ENCODE measurements at regions of chr3 and their contacts with region 1.

Region 1: DNA sequence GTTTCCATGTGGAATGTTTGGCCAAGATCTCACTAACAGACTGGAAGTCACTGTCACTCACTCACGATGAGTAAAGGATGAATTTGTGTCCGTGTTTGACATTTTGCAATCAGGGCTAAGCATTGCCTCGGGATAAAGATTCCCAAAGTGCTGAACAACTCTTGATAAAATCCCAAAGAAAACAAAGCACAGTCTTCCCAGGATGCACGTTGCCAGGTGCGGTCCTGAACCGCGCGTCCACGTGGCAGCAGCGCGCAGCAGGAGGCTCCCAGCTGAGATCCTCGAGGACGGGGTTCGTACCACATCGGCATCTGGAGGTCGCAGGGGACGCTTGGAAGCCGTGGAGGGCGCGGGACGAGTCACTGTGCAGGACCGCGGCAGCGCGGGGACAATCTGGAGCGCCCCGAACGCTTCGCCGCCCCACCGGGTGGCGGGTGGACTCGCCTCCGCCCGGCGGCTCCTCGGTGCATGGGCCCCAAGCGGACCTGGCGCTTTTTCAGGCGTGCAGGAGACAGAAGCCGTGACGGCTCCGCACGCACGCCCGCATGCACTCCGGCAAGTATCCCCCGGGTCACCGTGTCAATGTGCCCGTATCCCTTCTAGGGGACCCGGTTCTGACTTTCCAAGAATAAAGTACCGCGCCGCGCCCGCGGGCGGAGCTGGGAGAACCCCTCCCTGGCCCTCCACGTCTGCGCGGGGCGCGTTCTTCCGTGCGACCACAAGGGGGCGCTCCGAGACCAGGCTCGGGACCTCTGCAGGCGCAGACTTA is 17.7 kb downstream of the CPN2 start:
- DNase-seq: peak; percentile 84 to 90
- ATAC-seq: peak; percentile 82 to 94 (median 92)
- H3K4me3 ChIP-seq: peak overlapping the region in 9 of 10 donors; percentile 23 to 61 (median 46)
- H3K27ac ChIP-seq: no peak overlapping the region
- H3K4me1 ChIP-seq: peaks cover 0 to 28% (median 12%) of the 10 kb centered on the region in 9 donors
- H3K27me3 ChIP-seq: peaks cover 0 to 55% (median 32%) of the 10 kb centered on the region in 7 donors
- CTCF ChIP-seq: peak; percentile 98 to 99 (median 99)

Region 2: DNA sequence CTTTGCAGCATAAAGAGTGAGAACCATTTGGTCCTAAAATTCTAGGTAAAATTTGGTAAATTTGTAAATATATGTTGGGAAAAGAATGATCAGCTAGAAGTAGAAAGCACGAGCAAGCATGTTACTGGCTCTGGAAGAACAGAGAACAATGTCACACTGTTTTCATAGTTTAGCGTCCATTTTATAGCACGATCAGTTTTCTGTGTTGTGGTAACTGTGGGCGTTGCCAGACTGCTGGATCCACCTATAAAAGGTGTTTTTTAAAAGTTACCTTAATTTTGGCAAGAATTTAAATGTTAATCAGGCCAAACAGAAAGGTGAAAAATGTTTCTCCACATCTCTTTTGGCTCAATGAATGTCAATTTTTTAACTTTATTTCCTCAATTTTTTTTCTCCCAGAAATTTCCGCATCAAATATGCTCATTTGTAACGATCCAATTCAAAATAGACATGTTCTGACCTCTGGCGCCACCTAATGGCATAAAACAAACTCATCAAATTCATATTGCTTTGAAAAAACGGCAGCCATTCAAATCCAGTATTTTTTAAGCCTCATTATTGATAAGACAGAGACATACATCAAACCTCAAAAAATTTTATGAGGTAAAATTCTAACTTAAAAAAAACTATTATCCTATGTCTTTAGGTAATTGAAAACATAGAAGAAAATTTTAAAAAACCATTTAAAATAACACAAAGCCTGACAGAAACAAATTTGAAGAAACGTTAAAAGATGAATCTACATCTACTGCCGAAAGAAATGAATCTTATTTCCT is 71.2 kb after region 1 on chr3:
- intact Hi-C with region 1: loop called (anchors 1 to 5 kb)
- DNase-seq: peak in 1 of 2 donors; percentile 48
- ATAC-seq: no peak
- H3K4me3 ChIP-seq: no peak overlapping the region
- H3K27ac ChIP-seq: no peak overlapping the region
- H3K4me1 ChIP-seq: no peaks in the 10 kb centered on the region
- H3K27me3 ChIP-seq: peaks cover 0 to 7% (median 0%) of the 10 kb centered on the region in 7 donors
- CTCF ChIP-seq: peak; percentile 52 to 81 (median 74)

Region 3: DNA sequence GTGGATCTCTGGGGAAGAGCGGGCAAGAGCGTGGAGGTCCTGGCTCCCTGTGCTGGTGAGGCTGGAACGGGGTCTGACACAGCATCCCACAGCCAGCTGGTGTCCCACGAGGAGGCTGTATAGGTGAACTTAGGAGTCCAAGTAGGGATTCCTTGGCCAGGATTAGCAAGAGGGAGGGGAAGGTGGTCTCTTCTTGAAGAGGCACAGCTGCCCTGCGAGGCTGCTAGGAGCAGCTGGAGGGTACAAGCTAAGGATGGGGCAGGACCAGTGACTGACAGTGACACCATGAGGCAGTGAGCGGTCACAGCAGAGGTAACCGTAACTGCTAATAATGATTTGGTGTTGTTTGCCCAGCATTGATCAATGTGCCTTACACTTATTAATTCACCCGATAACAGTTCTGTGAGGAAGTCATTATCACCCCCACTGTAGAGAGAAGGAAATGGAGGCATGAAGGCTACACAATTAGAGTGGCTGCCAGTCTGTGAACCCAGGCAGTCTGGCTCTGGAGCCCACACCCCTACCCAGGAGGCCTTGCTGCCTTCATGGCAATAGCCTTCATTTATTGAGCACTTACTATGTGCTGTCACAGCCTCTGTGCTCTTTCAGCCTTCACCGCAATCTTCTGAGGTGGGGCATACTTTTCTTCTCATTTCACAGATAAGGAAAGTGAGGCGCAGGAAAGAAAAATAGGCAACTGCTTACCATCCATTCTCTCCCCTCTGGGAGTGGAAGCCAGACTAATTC is 240.5 kb after region 1 on chr3:
- intact Hi-C with region 1: loop called in 2 of 10 experiments (anchors 5 to 10 kb)
- DNase-seq: peak; percentile 25 to 53
- ATAC-seq: peak; percentile 53 to 75 (median 69)
- H3K4me3 ChIP-seq: no peak overlapping the region
- H3K27ac ChIP-seq: peak overlapping the region in 6 of 10 donors; percentile 75 to 93 (median 86)
- H3K4me1 ChIP-seq: peaks cover 20 to 74% (median 43%) of the 10 kb centered on the region in 9 donors
- H3K27me3 ChIP-seq: no peaks in the 10 kb centered on the region
- CTCF ChIP-seq: peak in 7 of 9 donors; percentile 53 to 73 (median 66)

Region 4: DNA sequence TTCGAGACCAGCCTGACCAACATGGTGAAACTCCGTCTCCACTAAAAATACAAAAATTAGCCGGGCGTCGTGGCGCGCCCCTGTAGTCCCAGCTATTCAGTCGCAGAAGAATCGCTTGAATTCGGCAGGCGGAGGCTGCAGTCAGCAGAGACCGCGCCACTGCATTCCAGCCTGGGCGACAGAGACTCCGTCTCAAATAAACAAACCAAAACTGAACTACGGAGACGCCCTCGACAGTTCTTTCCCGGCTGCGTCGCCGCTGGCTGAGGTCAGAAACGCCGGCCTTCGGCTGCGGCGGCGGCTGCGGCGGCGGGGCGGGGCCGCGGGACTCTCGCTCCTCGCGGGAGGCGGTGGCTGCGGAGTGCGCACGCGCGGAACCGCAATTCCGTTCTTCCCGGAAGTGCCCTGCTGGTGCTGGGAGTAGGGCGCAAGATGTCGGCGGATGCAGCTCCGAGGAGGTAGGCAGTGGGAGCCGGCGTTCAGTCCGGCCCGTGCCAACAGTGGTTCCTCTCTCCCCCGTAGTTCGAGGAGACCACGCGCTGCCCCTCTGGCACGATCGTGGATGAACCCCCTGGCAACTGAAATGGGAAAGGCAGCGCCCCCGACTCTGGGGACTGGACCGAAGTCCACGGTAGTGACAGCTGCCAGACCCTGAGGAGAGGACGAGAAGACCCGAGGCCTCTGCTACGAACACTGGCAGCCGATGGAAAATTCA is 250.4 kb after region 1 on chr3:
- intact Hi-C with region 1: loop called in 3 of 10 experiments (anchors 5 to 10 kb)
- DNase-seq: peak; percentile 93 to 97
- ATAC-seq: peak; percentile 75 to 95 (median 92)
- H3K4me3 ChIP-seq: peak overlapping the region; percentile 63 to 92 (median 72)
- H3K27ac ChIP-seq: peak overlapping the region; percentile 89 to 99 (median 94)
- H3K4me1 ChIP-seq: peaks cover 0 to 59% (median 29%) of the 10 kb centered on the region in 9 donors
- H3K27me3 ChIP-seq: no peaks in the 10 kb centered on the region
- CTCF ChIP-seq: peak in 2 of 9 donors; percentile 7 to 10

Region 5: GRCh38 chr3:194592798-194593752 is 259.7 kb after region 1 on chr3:
- intact Hi-C with region 1: loop called in 5 of 10 experiments (anchors 5 to 10 kb)
- DNase-seq: no peak
- ATAC-seq: peak in 2 of 8 donors; percentile 24 to 50
- H3K4me3 ChIP-seq: no peak overlapping the region
- H3K27ac ChIP-seq: peak overlapping the region in 3 of 10 donors; percentile 46 to 53 (median 48)
- H3K4me1 ChIP-seq: peaks cover 0 to 27% (median 12%) of the 10 kb centered on the region in 9 donors
- H3K27me3 ChIP-seq: no peaks in the 10 kb centered on the region
- CTCF ChIP-seq: peak in 1 of 9 donors; percentile 12

Region 6: GRCh38 chr3:194623449-194624290 is 290.3 kb after region 1 on chr3:
- intact Hi-C with region 1: loop called in 1 of 10 experiments (anchors 10 kb)
- DNase-seq: no peak
- ATAC-seq: no peak
- H3K4me3 ChIP-seq: no peak overlapping the region
- H3K27ac ChIP-seq: no peak overlapping the region
- H3K4me1 ChIP-seq: peaks cover 0 to 6% (median 0%) of the 10 kb centered on the region in 9 donors
- H3K27me3 ChIP-seq: no peaks in the 10 kb centered on the region
- CTCF ChIP-seq: no peak

Measured in heart right ventricle (tissue), 16 donors.